GM23248 (cell line): ENCODE measurements at regions of chr15 and their contacts with region 1.

Region 1: GRCh38 chr15:56432304-56432703 is 32.6 kb downstream of the MNS1 start:
- DNase-seq: no peak
- H3K4me3 ChIP-seq: no peak overlapping the region
- H3K27ac ChIP-seq: no peak overlapping the region
- H3K4me1 ChIP-seq: no peaks in the 10 kb centered on the region
- H3K27me3 ChIP-seq: no peaks in the 10 kb centered on the region

Region 2: DNA sequence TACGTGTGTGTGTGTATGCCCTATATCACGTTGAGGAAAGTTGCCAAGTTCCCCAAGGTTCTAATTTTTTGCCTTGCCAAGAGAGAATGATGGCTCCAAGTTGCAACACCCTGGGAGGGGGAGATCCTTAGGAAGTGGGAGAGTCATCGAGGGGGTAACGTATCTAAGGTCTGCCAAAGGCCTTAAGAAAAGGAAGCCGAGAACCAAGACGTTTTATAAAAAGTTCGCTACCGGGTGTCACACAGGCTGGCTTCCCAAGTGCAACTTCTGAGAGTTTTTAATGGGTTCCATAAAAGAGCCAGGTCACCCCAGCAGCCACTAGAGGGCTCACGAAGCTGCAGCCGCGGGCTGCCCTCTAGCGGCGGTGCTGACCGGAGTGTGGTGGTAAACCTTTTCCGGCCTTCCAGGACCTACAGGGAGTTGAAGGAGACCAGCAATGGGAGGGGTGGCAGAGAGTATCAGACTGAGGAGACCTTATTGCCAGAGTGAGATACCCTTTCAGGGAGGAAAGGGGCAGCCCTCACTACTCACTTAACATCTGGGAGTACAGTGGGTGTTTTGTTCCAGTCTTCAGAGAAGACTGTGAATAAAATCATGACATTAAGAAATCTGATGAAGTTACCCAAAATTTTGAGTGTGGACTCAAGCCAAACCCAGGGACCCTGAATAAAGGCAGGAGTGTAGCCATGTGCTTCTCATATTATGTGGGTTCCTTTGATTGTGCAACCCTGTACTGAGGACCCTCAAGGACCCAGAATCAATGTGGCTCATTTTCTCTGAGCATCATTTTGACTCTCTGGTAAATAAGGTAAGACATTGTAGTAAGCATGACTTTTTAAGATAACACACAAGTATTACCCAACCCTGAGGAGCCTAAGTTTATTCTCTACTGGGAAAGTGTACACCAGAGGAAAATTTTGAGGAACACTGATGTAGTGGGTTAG is 186.2 kb before region 1 on chr15:
- in situ Hi-C with region 1: loop called (anchors 5 kb)
- DNase-seq: peak; percentile 95
- H3K4me3 ChIP-seq: peak overlapping the region; percentile 75
- H3K27ac ChIP-seq: peak overlapping the region; percentile 54
- H3K4me1 ChIP-seq: peaks cover 17% of the 10 kb centered on the region
- H3K27me3 ChIP-seq: no peaks in the 10 kb centered on the region